ENCODE measurements at regions of chr15 and their contacts with region 1.

Region 1: GRCh38 chr15:46080016-46080415 is 445.2 kb downstream of the SQOR start:
- DNase-seq: no peak
- H3K4me3 ChIP-seq: no peak overlapping the region
- H3K27ac ChIP-seq: no peak overlapping the region
- H3K4me1 ChIP-seq: no peaks in the 10 kb centered on the region
- H3K27me3 ChIP-seq: no peaks in the 10 kb centered on the region
- CTCF ChIP-seq: no peak
- EP300 ChIP-seq: no peak
- POLR2A ChIP-seq: no peak

Region 2: DNA sequence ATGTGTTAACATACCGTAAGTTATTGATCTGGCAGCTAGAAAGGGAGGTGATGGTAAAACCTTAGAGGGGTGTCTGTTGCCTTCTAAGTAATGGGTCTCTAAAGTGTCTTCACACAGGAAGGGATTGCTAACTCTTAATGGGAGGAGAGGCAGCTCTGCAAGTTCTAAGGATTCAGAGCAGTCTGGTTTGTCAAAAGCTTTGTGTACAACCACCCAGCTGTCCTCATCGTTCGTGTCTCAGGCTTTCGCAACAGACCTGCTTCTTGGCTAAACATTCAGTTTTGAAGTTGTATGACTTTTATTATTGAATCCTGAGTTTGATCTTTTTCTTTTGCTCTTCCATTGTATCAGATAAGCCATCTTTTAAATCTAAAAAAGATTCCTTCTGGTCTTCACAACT is 40.3 kb before region 1 on chr15:
- intact Hi-C with region 1: loop called in 1 of 4 experiments (anchors 1 kb)
- DNase-seq: no peak
- H3K4me3 ChIP-seq: no peak overlapping the region
- H3K27ac ChIP-seq: no peak overlapping the region
- H3K4me1 ChIP-seq: no peaks in the 10 kb centered on the region
- H3K27me3 ChIP-seq: no peaks in the 10 kb centered on the region
- CTCF ChIP-seq: no peak
- EP300 ChIP-seq: no peak
- POLR2A ChIP-seq: no peak

Region 3: GRCh38 chr15:46137443-46137842 is 57.4 kb after region 1 on chr15:
- intact Hi-C with region 1: no loop called
- DNase-seq: no peak
- H3K4me3 ChIP-seq: no peak overlapping the region
- H3K27ac ChIP-seq: no peak overlapping the region
- H3K4me1 ChIP-seq: no peaks in the 10 kb centered on the region
- H3K27me3 ChIP-seq: no peaks in the 10 kb centered on the region
- CTCF ChIP-seq: no peak
- EP300 ChIP-seq: no peak
- POLR2A ChIP-seq: no peak

Region 4: GRCh38 chr15:46518381-46518780 is 438.4 kb after region 1 on chr15:
- intact Hi-C with region 1: no loop called
- DNase-seq: no peak
- H3K4me3 ChIP-seq: no peak overlapping the region
- H3K27ac ChIP-seq: no peak overlapping the region
- H3K4me1 ChIP-seq: no peaks in the 10 kb centered on the region
- H3K27me3 ChIP-seq: no peaks in the 10 kb centered on the region
- CTCF ChIP-seq: no peak
- EP300 ChIP-seq: no peak
- POLR2A ChIP-seq: no peak

Region 5: GRCh38 chr15:46933332-46933731 is 853.3 kb after region 1 on chr15:
- intact Hi-C with region 1: no loop called
- DNase-seq: no peak
- H3K4me3 ChIP-seq: no peak overlapping the region
- H3K27ac ChIP-seq: no peak overlapping the region
- H3K4me1 ChIP-seq: no peaks in the 10 kb centered on the region
- H3K27me3 ChIP-seq: no peaks in the 10 kb centered on the region
- CTCF ChIP-seq: no peak
- EP300 ChIP-seq: no peak
- POLR2A ChIP-seq: no peak